ENCODE measurements at regions of chr1 and their contacts with region 1.

Region 1: GRCh38 chr1:71610476-71610875 is 529.6 kb upstream of the ZRANB2 start:
- DNase-seq: no peak
- H3K4me3 ChIP-seq: no peak overlapping the region
- H3K27ac ChIP-seq: no peak overlapping the region
- H3K4me1 ChIP-seq: no peaks in the 10 kb centered on the region
- H3K27me3 ChIP-seq: no peaks in the 10 kb centered on the region
- CTCF ChIP-seq: no peak

Region 2: DNA sequence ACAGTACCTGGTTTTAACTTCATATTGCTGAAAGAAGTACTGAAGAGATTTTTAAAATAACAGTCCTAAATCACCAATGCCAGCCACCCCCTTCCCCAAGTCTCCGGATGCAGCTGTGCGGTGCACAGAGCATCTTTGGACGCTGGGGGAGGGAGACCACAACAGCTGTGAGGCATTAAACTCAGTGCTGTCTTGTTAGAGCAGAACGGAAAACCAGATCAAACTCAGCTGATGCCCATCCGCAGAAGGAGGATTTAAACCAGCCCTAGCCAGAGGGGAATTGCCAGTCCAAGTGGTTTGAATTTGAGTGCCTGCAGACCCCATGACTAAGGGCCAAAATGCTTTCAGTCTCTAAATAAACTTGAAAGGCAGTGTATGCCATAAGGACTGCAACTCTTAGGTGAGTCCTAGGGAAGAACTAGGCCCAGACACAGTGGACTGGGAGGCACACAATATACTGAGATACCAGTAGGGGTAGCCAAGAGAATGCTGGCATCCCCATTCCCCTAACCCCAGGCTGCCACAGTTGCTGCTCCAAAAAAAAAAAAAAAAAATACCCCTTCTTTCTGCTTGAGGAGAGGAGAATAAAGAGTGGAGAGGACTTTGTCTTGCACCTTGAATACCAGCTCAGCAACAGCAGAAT is 95.7 kb after region 1 on chr1:
- CTCF ChIA-PET with region 1: no interaction called
- dilution Hi-C with region 1: loop called (anchors 5 kb)
- in situ Hi-C with region 1: no loop called
- intact Hi-C with region 1: no loop called
- DNase-seq: no peak
- H3K4me3 ChIP-seq: no peak overlapping the region
- H3K27ac ChIP-seq: no peak overlapping the region
- H3K4me1 ChIP-seq: no peaks in the 10 kb centered on the region
- H3K27me3 ChIP-seq: no peaks in the 10 kb centered on the region
- CTCF ChIP-seq: no peak

Measured in mammary epithelial cell (primary cell).